ENCODE measurements at regions of chr3 and their contacts with region 1.

Region 1: GRCh38 chr3:185796431-185797107 is 28.3 kb downstream of the IGF2BP2 start:
- DNase-seq: peak; percentile 82
- H3K4me3 ChIP-seq: no peak overlapping the region
- H3K27ac ChIP-seq: peak overlapping the region; percentile 66
- H3K4me1 ChIP-seq: peaks cover 29% of the 10 kb centered on the region
- H3K27me3 ChIP-seq: no peaks in the 10 kb centered on the region
- CTCF ChIP-seq: no peak
- POLR2A ChIP-seq: no peak

Region 2: DNA sequence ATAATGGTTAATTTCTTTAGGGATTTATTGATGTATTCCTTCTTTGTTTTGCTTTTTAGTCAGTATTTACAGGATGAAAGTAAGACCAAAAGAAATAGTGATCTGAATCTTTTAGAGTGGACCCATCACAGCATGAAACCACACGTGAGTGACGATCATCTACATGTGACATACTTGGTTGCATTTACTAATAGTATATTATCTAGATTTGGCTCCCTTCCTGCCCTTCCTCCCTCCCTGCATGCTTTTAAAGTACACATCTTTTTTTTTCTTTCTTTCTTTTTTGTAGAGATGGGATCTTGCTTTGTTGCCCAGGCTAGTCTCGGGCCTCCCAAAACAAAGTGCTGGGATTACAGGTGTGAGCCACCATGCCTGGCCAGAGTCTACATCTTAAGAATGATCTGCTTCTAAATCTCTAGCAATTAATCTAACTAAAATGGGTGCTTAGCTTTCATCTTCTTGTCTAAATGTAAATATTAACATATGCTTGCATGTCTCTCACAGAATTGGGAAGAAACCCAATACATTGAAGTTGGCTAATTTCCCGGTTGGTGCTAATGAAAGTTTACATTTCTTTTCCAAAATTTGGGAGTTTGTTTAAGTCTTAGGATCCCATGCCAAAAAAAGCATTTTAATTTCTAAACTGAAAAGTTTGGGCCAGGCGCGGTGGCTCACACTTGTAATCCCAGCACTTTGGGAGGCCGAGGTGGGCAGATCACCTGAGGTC is 172.5 kb before region 1 on chr3:
- CTCF ChIA-PET with region 1: no interaction called
- POLR2A ChIA-PET with region 1: no interaction called
- dilution Hi-C with region 1: no loop called
- intact Hi-C with region 1: no loop called
- DNase-seq: no peak
- H3K4me3 ChIP-seq: no peak overlapping the region
- H3K27ac ChIP-seq: no peak overlapping the region
- H3K4me1 ChIP-seq: no peaks in the 10 kb centered on the region
- H3K27me3 ChIP-seq: no peaks in the 10 kb centered on the region
- CTCF ChIP-seq: no peak
- POLR2A ChIP-seq: no peak

Region 3: DNA sequence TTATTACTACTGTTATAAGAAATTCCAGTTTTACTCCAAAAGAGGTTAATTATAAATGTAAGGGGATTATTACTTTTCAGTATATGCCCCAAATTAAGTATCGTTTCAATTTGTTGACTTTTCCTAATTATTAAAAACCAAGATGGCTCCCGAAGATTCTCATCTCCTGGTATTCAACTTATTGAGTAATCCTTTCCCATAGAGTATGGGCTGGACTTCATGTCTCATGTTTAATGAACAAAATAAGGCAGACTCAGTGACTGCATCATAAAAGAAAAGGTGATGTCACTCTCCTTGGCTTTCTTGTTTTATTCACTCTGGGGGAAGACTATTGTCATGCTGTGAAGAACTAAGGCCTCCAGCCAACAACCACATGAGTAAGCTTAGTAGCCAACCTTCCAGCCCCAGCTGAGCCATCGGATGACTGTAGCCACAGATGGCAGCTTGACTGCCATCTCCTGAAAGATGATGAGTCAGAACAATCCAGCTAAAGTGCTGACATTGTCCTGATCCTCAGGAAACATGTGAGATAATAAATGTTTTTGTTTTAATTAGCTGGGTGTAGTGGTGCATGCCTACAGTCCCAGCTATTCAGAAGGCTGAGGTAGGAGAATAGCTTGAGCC is 11.0 kb after region 1 on chr3:
- CTCF ChIA-PET with region 1: no interaction called
- POLR2A ChIA-PET with region 1: no interaction called
- dilution Hi-C with region 1: no loop called
- intact Hi-C with region 1: loop called (anchors 1 kb)
- DNase-seq: peak; percentile 84
- H3K4me3 ChIP-seq: no peak overlapping the region
- H3K27ac ChIP-seq: peak overlapping the region; percentile 9
- H3K4me1 ChIP-seq: no peaks in the 10 kb centered on the region
- H3K27me3 ChIP-seq: no peaks in the 10 kb centered on the region
- CTCF ChIP-seq: no peak
- POLR2A ChIP-seq: no peak

Region 4: DNA sequence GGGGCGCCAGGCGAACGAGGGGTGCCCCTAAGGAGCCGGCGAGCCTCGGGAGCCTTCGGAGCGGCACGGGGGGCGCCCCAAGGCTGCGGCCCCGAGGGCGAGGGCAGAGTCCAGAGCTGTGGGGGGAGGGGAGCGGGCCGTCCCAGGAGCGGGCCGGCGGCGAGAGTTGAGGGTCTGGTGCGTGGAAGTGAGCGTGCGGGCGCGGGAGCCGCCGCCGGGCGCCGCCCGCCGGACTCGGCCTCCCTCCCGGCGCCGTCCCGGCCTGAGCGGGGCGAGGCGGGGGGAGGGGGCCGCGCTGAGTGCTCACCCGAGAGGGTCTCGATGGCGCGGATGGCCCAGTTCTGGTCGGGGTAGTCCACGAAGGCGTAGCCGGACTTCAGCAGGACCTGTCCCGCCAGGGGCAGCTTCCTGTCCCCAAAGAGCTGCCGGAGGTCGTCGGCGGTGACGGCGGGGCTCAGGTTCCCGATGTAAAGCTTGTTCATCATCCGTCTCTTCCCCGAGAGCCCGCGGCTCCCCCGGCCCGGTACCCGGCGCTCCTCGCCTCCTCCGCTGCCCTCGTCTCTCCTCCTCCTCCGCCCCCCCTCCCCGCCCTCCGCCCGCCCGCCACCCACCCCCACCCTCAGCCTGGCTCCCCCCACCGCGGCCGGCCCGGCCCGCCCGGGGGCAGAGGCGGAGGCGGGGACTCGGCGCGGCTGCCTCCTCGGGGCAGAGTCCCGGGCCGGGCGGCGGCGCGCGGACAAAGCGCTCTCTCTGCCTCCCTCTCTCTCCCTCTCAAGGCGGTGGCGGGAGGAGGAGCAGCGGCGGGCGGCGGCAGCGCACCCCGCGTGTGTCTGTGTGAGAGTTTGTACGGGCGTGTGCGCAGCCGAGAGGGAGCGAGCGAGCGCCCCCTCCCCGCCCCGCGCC is 28.2 kb after region 1 on chr3 and contains the start of gene IGF2BP2:
- CTCF ChIA-PET with region 1: interaction called, 3 read pairs
- POLR2A ChIA-PET with region 1: interaction called, 3 read pairs
- dilution Hi-C with region 1: no loop called
- intact Hi-C with region 1: loop called (anchors 1 kb)
- DNase-seq: peak; percentile 84
- H3K4me3 ChIP-seq: peak within 1 kb of the TSS; percentile 87 to 100 (median 98)
- H3K27ac ChIP-seq: peak within 1 kb of the TSS; percentile 84
- H3K4me1 ChIP-seq: peaks cover 32% of the 10 kb centered on the region
- H3K27me3 ChIP-seq: no peaks in the 10 kb centered on the region
- CTCF ChIP-seq: peak in 1 of 2 donors; percentile 11
- POLR2A ChIP-seq: peak; percentile 69
- total RNA-seq, gene IGF2BP2: 122 and 130 TPM in 2 replicates

Region 5: DNA sequence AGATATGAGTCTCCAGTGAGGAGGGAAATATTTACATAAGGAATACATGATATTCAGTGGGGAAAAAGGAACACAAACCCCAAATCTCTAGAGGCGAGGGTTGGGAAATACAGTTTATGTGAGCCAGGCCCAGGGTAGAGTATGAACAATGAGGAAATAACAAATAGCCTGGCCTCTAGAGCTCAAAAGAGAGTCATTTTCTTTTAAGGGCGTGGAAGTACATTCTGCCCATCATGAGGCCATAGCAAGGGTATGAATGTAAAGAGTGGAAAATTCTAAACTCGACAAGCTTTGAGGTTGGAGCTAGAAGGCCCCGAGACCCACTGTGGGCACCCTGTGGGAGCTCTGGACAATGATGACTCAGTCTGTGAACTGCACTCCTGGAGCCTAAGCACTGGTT is 56.1 kb after region 1 on chr3:
- CTCF ChIA-PET with region 1: no interaction called
- POLR2A ChIA-PET with region 1: no interaction called
- dilution Hi-C with region 1: no loop called
- intact Hi-C with region 1: no loop called
- DNase-seq: no peak
- H3K4me3 ChIP-seq: no peak overlapping the region
- H3K27ac ChIP-seq: no peak overlapping the region
- H3K4me1 ChIP-seq: no peaks in the 10 kb centered on the region
- H3K27me3 ChIP-seq: no peaks in the 10 kb centered on the region
- CTCF ChIP-seq: no peak
- POLR2A ChIP-seq: no peak

Region 6: DNA sequence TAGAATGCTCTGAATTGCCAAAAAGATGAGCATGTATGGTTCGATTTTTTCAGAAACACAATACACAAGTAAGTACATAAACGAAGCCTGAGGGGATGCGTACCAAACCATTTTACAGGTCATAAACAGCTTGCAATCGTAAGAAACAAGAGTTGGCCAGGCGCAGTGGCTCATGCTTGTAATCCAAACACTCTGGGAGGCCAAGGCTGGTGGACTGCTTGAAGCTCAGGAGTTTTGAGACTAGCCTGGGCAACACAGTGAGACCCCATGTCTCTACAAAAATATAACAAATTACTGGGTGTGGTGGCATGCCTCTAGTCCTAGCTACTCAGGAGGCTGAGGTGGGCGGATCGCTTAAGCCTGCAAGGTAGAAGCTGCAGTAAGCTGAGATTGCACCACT is 127.8 kb after region 1 on chr3:
- CTCF ChIA-PET with region 1: no interaction called
- POLR2A ChIA-PET with region 1: no interaction called
- dilution Hi-C with region 1: no loop called
- intact Hi-C with region 1: no loop called
- DNase-seq: no peak
- H3K4me3 ChIP-seq: no peak overlapping the region
- H3K27ac ChIP-seq: no peak overlapping the region
- H3K4me1 ChIP-seq: peaks cover 23% of the 10 kb centered on the region
- H3K27me3 ChIP-seq: no peaks in the 10 kb centered on the region
- CTCF ChIP-seq: no peak
- POLR2A ChIP-seq: no peak

Region 7: GRCh38 chr3:186320862-186321568 is 524.4 kb after region 1 on chr3:
- CTCF ChIA-PET with region 1: no interaction called
- POLR2A ChIA-PET with region 1: no interaction called
- dilution Hi-C with region 1: no loop called
- intact Hi-C with region 1: no loop called
- DNase-seq: no peak
- H3K4me3 ChIP-seq: no peak overlapping the region
- H3K27ac ChIP-seq: no peak overlapping the region
- H3K4me1 ChIP-seq: no peaks in the 10 kb centered on the region
- H3K27me3 ChIP-seq: no peaks in the 10 kb centered on the region
- CTCF ChIP-seq: no peak
- POLR2A ChIP-seq: no peak